ENCODE measurements at regions of chr13 and their contacts with region 1.

Region 1: GRCh38 chr13:104632736-104633135 is 1566.5 kb upstream of the SLC10A2 start:
- DNase-seq: no peak

Region 2: GRCh38 chr13:105370011-105370650 is 737.4 kb after region 1 on chr13:
- intact Hi-C with region 1: loop called in 1 of 2 experiments (anchors 5 kb)
- DNase-seq: no peak

Measured in posterior vena cava (tissue), 2 donors.